ENCODE measurements at regions of chr7 and their contacts with region 1.

Region 1: DNA sequence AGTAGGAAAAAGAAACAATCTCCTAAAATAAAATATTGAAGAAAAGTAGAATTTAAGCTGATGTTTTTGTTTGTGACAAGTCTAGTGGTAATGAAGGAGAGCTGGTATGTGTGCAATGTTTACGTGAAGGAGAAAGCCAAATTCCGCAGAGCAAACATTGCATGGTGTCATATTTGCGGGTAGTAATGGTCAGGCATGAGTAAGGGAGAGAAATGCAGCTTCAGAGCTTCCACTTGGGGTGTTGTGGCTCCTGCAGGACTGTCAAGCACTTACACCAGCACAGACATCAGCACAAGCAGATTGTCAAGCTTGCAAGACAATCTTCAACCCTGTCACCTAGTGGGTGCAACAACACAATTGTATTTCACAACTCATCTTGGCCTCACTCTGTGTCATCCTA is 136.5 kb upstream of the ETV1 start:
- DNase-seq: no peak
- ATAC-seq: peak; percentile 40
- H3K4me3 ChIP-seq: no peak overlapping the region
- H3K27ac ChIP-seq: no peak overlapping the region
- H3K4me1 ChIP-seq: 0 out of 2 replicates have a peak, but pooled peaks cover 7% of the 10 kb centered on the region
- H3K27me3 ChIP-seq: no peaks in the 10 kb centered on the region
- CTCF ChIP-seq: no peak

Region 2: GRCh38 chr7:14104861-14105260 is 21.1 kb before region 1 on chr7:
- CTCF ChIA-PET with region 1: no interaction called
- POLR2A ChIA-PET with region 1: no interaction called
- intact Hi-C with region 1: loop called (anchors 2 kb)
- DNase-seq: no peak
- ATAC-seq: no peak
- H3K4me3 ChIP-seq: no peak overlapping the region
- H3K27ac ChIP-seq: no peak overlapping the region
- H3K4me1 ChIP-seq: no peaks in the 10 kb centered on the region
- H3K27me3 ChIP-seq: no peaks in the 10 kb centered on the region
- CTCF ChIP-seq: no peak

Measured in PC-3 (cell line).